GM18951 (cell line): ENCODE measurements at regions of chr1 and their contacts with region 1.

Region 1: DNA sequence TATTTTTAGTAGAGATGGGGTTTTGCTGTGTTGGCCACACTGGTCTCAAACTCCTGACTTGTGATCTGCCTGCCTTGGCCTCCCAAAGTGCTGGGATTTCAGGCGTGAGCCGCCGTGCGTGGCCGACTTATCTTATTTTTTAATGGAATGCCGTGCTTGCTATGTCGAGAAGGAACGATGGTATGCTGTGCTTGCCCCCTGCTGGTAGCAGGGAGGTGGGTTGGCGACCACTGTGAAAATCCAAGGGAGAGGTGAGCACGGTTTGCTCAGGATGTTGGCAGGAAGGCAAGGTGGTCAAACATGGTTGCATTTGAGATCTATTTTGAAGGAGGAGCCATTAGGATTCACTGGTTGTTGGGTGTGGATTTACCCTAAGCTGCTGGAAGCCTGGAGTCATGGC is 45.8 kb upstream of the RCC2 start:
- POLR2A ChIP-seq: no peak

Region 2: GRCh38 chr1:17148950-17149608 is 336.2 kb before region 1 on chr1:
- in situ Hi-C with region 1: no loop called
- POLR2A ChIP-seq: no peak

Region 3: GRCh38 chr1:17297991-17298390 is 187.3 kb before region 1 on chr1:
- in situ Hi-C with region 1: no loop called
- POLR2A ChIP-seq: no peak

Region 4: DNA sequence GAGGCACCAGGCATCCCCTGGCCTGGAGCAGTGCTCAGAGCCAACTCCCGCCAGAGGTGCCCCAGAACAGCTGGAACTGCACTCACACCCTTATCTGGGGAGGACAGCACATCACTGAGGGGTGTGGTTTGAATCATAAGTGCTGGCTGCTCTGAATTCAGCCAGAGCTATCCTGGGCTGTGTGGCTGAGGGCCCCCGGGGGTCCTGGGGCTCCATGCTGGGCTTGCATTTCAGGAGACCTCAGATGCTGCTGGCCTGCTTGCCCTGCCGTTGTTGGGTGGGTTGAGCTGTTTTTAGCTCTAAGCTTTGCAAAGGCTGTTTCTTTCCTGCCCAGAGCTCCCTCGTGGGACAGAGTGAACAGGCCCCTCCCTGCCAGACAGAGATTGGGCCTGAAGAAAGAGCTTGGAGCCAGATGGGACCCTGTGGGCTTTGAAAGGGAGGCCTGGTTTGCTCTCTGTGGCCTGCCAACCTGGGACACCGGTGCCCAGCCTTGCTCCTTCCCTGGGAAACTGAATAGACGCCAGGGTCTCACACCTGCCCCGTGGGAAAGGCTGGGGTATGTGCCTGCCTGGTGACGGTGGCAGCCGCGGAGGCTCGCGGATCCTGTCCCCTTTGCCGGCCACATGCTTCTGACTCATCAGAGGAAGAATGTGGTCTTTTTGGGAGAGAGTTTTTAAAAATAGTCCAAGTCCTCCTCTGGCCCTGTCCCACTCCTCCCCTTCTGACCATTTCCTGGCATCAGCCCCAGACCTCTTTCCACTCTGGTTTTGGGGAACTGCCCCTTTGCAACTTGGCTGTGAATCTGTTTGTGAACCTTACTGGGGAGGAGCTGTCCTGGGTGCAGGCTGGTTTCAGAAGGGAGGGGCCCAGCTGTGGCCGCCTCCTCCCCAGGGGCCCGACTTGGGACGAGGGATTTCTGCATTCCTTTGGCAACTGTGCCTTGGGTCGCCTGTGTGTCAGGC is 84.2 kb after region 1 on chr1:
- in situ Hi-C with region 1: loop called (anchors 10 kb)
- POLR2A ChIP-seq: no peak